AG04450 (cell line): ENCODE measurements at regions of chr3 and their contacts with region 1.

Region 1: DNA sequence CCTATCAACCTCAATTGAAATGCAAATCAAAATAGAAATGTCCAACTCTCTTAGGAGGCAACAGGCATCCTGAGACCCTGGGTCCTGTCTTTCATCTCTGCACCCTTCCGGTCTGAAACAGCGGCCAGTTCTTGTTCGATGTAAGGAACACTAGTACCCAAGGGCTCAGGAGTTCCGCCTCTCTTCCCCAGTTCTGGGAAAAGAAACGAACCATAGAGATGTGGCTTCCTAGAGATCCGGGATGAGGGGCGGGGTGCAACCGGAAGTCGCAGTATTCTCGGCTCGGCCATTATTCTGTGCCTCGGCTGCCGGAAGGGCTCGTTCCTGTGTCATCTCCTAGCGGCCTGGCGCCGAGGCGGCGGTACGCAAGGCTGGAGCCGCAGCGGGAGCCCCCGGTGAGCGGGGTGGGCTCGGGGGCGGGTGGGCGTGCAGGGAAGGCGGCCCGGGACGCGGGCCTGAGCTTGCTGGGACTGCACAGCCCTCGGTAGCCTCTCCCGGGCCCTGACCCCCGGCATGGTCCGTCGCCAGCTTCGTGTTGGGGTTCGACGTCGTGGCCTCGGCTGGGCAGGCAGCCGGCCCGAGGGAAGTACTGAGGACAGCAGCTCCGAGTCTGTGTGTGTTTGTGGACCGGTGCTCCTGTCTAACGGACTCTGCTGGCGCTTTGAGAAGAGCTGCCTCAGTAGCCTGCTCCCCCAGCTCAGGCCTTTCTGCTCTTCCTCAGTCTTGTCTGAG is at the start of gene ZNF197:
- DNase-seq: peak; percentile 72
- H3K4me3 ChIP-seq: peak within 1 kb of the TSS; percentile 87
- H3K27ac ChIP-seq: peak within 1 kb of the TSS; percentile 82
- H3K27me3 ChIP-seq: no peaks in the 10 kb centered on the region
- CTCF ChIP-seq: 0 out of 2 replicates have a peak, but pooled peaks have one; percentile 2
- polyA plus RNA-seq, gene ZNF197: 11.1 and 13.9 TPM in 2 replicates

Region 2: GRCh38 chr3:44016798-44017197 is 608.1 kb before region 1 on chr3:
- CTCF ChIA-PET with region 1: no interaction called
- POLR2A ChIA-PET with region 1: no interaction called
- DNase-seq: no peak
- H3K4me3 ChIP-seq: no peak overlapping the region
- H3K27ac ChIP-seq: no peak overlapping the region
- H3K27me3 ChIP-seq: peaks cover 20% of the 10 kb centered on the region
- CTCF ChIP-seq: no peak

Region 3: GRCh38 chr3:44648564-44649229 is 23.8 kb after region 1 on chr3 and contains the start of gene ZNF35:
- CTCF ChIA-PET with region 1: interaction called, 3 read pairs
- POLR2A ChIA-PET with region 1: interaction called, 11 read pairs
- DNase-seq: peak; percentile 75
- H3K4me3 ChIP-seq: peak within 1 kb of the TSS; percentile 86
- H3K27ac ChIP-seq: peak within 1 kb of the TSS; percentile 79
- H3K27me3 ChIP-seq: no peaks in the 10 kb centered on the region
- CTCF ChIP-seq: no peak
- polyA plus RNA-seq, gene ZNF35: 8.1 and 8.3 TPM in 2 replicates